ENCODE measurements at regions of chr2 and their contacts with region 1.

Region 1: DNA sequence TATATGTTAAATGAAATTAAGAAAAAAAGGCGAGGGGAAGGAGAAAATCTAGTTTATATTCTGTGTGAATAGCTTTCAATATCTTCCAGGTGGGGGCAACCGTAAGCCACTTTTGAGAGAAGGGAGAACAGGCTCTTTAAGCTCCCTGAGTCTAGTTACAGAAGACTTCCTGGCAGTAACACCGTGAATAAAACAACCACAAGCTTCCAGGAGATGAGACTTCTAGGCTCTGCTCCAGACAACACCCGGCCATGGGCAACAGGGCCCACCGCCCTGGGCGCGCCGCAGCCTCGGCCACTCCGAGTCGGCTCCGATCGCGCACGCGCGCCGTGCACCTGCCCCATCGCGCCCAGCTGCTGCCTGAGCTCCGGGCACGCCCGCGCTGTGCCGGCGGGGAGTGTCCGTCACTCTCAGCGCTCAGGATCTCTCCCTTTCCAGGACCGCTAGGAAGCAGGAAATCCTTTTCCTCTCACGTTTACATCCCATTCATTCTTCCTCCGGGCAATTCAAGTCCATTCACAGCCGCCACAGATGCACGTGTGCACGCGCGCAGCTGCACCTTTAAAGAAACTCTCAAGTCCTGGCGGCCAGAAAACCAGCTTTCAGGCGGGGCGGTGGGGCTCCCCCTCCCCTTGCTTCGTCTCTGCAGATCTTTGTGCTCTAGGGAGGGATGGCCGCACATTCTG is 19.4 kb upstream of the PAX3 start:
- DNase-seq: peak; percentile 76
- H3K4me3 ChIP-seq: peak overlapping the region; percentile 8 to 61 (median 44)
- H3K27ac ChIP-seq: no peak overlapping the region
- H3K4me1 ChIP-seq: peaks cover 16% of the 10 kb centered on the region
- H3K27me3 ChIP-seq: peaks cover 52 to 81% of the 10 kb centered on the region in 2 experiments
- CTCF ChIP-seq: peak; percentile 24 to 39
- POLR2A ChIP-seq: no peak

Region 2: GRCh38 chr2:221943076-221943810 is 374.9 kb before region 1 on chr2:
- CTCF ChIA-PET with region 1: no interaction called
- POLR2A ChIA-PET with region 1: no interaction called
- dilution Hi-C with region 1: no loop called
- intact Hi-C with region 1: no loop called
- DNase-seq: peak; percentile 83
- H3K4me3 ChIP-seq: no peak overlapping the region
- H3K27ac ChIP-seq: peak overlapping the region; percentile 83
- H3K4me1 ChIP-seq: peaks cover 26% of the 10 kb centered on the region
- H3K27me3 ChIP-seq: no peaks in the 10 kb centered on the region
- CTCF ChIP-seq: no peak
- POLR2A ChIP-seq: no peak

Region 3: GRCh38 chr2:222208010-222208690 is 110.0 kb before region 1 on chr2:
- CTCF ChIA-PET with region 1: no interaction called
- POLR2A ChIA-PET with region 1: no interaction called
- dilution Hi-C with region 1: no loop called
- intact Hi-C with region 1: no loop called
- DNase-seq: no peak
- H3K4me3 ChIP-seq: no peak overlapping the region
- H3K27ac ChIP-seq: no peak overlapping the region
- H3K4me1 ChIP-seq: no peaks in the 10 kb centered on the region
- H3K27me3 ChIP-seq: no peaks in the 10 kb centered on the region
- CTCF ChIP-seq: no peak
- POLR2A ChIP-seq: no peak

Region 4: GRCh38 chr2:222248256-222248655 is 69.9 kb before region 1 on chr2:
- CTCF ChIA-PET with region 1: no interaction called
- POLR2A ChIA-PET with region 1: no interaction called
- dilution Hi-C with region 1: no loop called
- intact Hi-C with region 1: no loop called
- DNase-seq: no peak
- H3K4me3 ChIP-seq: no peak overlapping the region
- H3K27ac ChIP-seq: no peak overlapping the region
- H3K4me1 ChIP-seq: no peaks in the 10 kb centered on the region
- H3K27me3 ChIP-seq: no peaks in the 10 kb centered on the region
- CTCF ChIP-seq: no peak
- POLR2A ChIP-seq: no peak

Region 5: DNA sequence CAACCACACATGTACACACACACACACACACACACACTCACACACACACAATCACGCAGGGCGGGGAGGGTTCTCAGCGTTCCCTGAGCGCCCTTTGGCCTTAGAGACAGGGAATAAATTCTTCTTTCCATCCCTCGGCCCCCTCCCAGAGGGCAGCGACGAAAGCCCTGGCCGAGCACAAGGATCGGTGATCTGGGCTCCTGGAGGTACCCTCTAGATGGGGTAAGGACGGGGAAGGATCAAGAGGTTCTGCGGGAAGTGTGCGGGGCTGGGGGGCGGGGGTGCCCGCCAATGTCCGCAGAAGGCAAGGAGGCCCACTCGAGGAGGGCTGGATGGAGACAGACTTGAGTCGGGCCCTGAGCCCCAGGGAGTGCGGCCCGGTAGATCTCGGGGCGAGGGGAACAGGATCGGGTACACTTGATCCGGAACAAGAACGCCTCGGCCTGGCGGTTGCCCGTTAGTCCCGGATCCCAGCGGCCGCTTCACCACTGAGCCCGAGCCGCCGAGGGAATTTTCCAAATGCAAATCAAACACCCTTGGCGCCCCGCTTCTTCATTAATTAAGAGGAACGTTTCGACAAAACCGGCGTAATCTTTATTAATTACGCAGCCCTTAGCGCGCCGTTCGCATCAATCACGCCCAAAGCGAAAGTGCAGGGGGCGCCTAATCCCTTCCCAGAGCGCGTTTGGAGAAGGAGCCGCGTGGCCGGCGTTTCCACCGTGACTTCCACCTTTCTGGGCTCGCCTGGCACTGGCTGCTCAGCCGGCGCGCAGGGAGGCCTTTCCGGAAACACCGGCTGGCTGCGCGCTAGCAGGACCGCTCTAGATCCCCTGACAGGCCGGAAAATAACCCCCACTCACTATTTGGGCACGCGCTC is 12.4 kb before region 1 on chr2:
- CTCF ChIA-PET with region 1: interaction called, 13 read pairs
- POLR2A ChIA-PET with region 1: no interaction called
- dilution Hi-C with region 1: no loop called
- intact Hi-C with region 1: no loop called
- DNase-seq: no peak
- H3K4me3 ChIP-seq: peak overlapping the region in 2 of 3 experiments; percentile 33 to 38
- H3K27ac ChIP-seq: no peak overlapping the region
- H3K4me1 ChIP-seq: peaks cover 9% of the 10 kb centered on the region
- H3K27me3 ChIP-seq: peaks cover 97 to 100% of the 10 kb centered on the region in 2 experiments
- CTCF ChIP-seq: no peak
- POLR2A ChIP-seq: no peak

Region 6: DNA sequence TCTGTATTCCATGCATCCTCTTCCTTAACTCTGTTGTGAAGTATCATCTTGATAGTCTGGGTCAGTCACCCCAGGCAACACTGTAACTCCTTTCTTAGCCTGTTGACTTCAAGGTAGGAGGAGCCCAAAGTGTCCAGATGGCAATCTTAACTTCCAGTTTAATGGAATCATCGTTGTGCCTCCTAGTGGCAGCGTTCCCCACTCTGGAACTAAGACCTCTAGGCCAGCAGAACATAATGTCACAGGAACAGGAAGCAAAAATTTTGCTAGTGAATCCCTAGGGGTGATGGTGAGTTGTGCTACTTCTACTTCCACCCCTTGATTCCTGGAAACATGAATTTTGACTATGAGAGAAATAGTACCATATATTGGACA is 117.9 kb after region 1 on chr2:
- CTCF ChIA-PET with region 1: interaction called, 6 read pairs
- POLR2A ChIA-PET with region 1: no interaction called
- dilution Hi-C with region 1: no loop called
- intact Hi-C with region 1: loop called (anchors 1 kb)
- DNase-seq: no peak
- H3K4me3 ChIP-seq: no peak overlapping the region
- H3K27ac ChIP-seq: no peak overlapping the region
- H3K4me1 ChIP-seq: no peaks in the 10 kb centered on the region
- H3K27me3 ChIP-seq: no peaks in the 10 kb centered on the region
- CTCF ChIP-seq: no peak
- POLR2A ChIP-seq: no peak

Region 7: DNA sequence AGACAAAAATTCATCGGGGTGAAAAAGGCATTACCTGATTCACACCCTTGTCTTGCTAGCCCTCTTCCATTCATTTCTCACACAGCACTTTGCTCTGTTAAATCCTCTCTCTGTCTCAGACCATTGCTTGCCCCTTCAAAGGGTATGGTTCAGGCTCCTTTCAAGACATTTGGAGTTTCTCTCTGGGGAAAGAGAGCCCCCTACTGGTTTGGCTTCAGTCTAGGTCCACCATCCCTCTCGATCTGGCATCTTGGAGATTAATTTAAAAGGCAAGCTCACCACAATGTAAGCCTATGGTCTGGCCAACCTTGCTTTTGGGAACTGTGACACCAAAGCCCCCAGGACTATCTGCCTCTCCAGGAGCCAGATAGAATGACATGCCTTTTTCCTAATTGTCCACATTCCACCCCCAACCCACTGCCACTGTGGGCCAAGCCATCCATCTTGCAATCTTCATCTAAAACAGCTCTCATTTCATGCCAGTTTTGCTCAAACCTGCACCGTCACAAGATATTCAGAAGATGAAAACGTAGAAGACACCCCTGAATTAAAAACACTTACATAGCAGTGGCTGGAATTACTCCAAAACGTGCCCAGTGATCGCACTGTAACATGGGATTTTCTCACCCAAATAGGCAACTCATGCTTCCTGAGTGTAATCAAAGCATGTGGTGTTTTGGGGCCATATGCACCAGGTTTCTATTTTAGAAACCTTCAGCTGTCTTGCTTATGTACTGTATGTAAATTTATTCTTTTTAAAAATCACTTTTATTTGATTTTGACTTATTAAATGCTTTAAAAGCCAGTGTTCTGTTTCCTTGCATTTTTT is 243.9 kb after region 1 on chr2:
- CTCF ChIA-PET with region 1: interaction called, 312 read pairs
- POLR2A ChIA-PET with region 1: no interaction called
- dilution Hi-C with region 1: no loop called
- intact Hi-C with region 1: loop called (anchors 1 kb)
- DNase-seq: peak; percentile 60
- H3K4me3 ChIP-seq: no peak overlapping the region
- H3K27ac ChIP-seq: no peak overlapping the region
- H3K4me1 ChIP-seq: no peaks in the 10 kb centered on the region
- H3K27me3 ChIP-seq: no peaks in the 10 kb centered on the region
- CTCF ChIP-seq: peak; percentile 74 to 75
- POLR2A ChIP-seq: no peak

Region 8: DNA sequence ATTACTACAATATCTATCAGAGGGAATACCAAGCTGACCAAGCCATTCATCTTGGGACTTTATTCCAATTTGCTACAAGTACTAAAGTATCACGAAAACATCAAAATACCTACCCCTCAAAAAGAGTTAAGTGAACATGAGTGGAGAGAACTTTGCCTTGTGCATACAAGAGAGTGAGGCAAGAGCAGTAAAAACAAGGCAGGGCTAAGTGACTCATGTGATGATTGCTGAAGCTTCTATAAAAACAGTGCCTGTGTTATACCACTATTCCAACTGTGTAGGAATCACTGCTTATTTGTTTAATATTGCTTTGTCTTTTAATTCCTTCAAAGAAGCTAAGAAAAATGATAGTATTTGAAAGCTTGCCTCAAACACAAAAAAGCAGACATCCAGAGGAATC is 276.5 kb after region 1 on chr2:
- CTCF ChIA-PET with region 1: interaction called, 15 read pairs
- POLR2A ChIA-PET with region 1: no interaction called
- dilution Hi-C with region 1: no loop called
- intact Hi-C with region 1: no loop called
- DNase-seq: peak; percentile 11
- H3K4me3 ChIP-seq: no peak overlapping the region
- H3K27ac ChIP-seq: no peak overlapping the region
- H3K4me1 ChIP-seq: no peaks in the 10 kb centered on the region
- H3K27me3 ChIP-seq: no peaks in the 10 kb centered on the region
- CTCF ChIP-seq: no peak
- POLR2A ChIP-seq: no peak